Activated T-helper 2 cell treated with anti-CD3 and anti-CD28 coated beads, Interferon-gamma antibody, Interleukin-2, Interleukin-4, amounts not matched to agents 10 μg/mL and 5 μg/mL and 100 μg/mL, durations not matched to agents 14 hours and 24 hours and 36 hours (primary cell): ENCODE measurements at regions of chr4 and their contacts with region 1.

Region 1: DNA sequence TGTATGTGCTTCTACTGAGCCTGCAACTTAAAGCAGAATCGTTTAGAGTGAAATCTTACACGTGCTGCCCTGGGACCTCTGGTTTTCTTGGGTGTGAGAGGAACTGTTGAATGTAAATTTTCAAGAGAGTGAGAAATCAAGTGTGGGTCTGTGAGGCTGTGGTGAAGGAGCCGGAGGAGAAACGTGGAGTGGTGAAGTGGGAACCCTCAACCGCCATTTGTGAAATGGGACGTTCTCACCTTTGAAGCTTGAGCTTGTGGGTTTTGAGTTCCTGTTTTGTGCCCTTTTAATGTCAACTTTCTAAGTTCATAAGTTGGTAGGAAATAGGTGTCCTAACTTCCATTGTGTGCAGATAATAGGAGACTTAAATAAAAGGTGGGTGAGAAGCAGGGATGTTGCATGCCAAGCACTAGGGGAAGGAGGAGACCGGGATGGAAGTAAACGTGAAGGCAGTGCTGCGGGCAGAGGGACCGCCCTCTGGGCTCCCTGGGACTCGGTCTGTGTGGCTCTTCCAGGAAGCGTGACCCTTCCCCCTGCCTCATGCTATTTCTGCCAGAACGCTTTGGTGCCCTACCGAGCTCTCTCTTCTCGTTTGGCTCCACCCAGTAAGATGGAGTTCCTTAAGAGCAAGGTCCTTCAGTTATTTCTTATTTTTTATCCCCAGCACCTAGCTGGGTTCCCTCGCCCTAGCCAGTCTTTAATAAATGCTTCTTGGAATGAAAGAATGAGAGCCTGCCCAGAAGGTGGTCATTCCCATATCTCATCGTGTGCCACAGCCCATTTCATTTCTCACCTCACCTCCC is 56.0 kb downstream of the TMEM131L start:
- DNase-seq: peak; percentile 60
- H3K4me3 Mint-ChIP-seq: peak overlapping the region; percentile 71
- H3K27ac Mint-ChIP-seq: peak overlapping the region; percentile 98
- H3K4me1 Mint-ChIP-seq: peaks cover 87% of the 10 kb centered on the region
- H3K27me3 Mint-ChIP-seq: no peaks in the 10 kb centered on the region

Region 2: DNA sequence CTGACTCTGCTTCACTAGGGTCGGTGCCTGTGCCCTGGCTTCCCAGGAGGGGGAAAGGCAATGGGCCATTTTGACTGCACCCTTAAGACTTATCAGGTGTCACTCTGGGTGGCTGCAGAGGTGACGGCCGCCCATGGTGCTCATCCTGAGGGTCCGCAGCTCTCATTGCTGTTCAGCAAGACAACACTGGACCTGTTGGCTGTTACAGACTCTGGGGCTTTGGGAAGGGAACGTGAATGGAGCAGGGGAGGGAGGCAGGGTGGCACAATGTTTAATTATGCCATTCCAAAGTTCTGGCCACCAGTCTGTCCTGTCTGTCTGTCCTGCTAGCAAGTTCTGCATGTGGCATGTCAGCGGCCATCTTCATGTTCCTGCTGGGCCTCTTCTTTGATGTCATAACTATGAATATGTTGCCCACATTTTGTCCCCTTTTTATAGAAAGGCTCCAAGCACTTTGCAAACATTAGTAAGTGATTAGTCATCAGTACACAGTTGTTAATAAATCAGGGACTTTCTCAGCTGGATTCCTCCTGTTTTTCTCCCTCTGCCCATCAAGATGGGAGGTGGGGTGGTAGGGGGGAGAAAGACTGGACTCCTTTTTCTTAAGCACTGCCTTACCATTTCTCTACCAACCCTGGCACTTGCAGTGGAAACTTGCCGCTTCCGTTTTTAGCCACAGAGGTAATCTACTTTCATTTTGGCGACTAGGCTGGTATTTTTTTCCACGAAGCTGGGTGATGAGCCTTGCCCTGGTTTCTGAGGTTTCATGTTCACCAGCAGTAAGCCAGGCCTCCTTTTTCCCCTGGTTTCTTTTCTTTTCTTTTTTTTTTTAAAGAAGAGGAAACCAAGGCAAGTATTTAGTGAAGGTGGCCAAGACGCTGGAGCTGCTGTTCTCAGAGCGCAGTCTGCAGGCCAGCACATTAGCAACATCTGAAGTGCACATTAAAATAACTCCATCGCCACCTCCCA is 406.6 kb before region 1 on chr4:
- intact Hi-C with region 1: loop called (anchors 5 kb)
- DNase-seq: peak; percentile 72
- H3K4me3 Mint-ChIP-seq: peak overlapping the region; percentile 40
- H3K27ac Mint-ChIP-seq: no peak overlapping the region
- H3K4me1 Mint-ChIP-seq: peaks cover 14% of the 10 kb centered on the region
- H3K27me3 Mint-ChIP-seq: peaks cover 19% of the 10 kb centered on the region

Region 3: DNA sequence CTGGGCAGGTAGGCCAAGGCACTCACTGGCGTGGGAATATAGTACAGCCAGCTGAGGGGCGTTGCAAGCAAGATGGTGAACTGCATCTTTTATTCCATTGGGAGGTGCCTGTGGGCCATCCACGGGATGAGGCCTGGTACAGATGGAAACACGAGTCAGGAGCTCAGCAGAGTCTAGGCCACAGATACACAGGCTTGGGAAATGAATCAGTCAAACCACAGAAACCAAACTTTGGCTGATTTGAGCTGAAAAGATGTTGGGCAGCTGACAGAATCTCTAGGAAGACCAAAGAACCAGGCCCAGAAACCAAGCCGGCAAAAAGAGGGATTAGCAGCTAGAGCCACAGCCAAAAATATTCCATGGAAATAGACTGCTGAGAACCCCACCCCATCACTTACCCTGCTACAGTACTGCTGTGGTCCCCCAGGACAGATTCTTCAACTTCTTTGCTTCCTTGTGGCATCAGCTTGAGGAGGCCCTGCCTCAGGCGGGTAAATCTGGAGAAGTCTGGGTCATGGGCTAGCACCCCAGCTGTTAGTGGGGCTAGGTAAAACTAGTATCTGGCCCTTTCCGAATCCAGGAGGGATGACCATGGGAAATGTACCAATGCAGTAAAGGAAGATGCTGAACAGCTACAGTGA is 19.4 kb after region 1 on chr4:
- intact Hi-C with region 1: loop called (anchors 2 kb)
- DNase-seq: no peak
- H3K4me3 Mint-ChIP-seq: no peak overlapping the region
- H3K27ac Mint-ChIP-seq: no peak overlapping the region
- H3K4me1 Mint-ChIP-seq: peaks cover 30% of the 10 kb centered on the region
- H3K27me3 Mint-ChIP-seq: no peaks in the 10 kb centered on the region